ENCODE measurements at regions of chr7 and their contacts with region 1.

Region 1: GRCh38 chr7:2732959-2733584 is 45.1 kb downstream of the AMZ1 start:
- DNase-seq: peak; percentile 56 to 77 (median 64)
- H3K4me3 ChIP-seq: no peak overlapping the region
- H3K27ac ChIP-seq: peak overlapping the region in 1 of 2 donors; percentile 60
- H3K4me1 ChIP-seq: peaks cover 20% of the 10 kb centered on the region
- H3K27me3 ChIP-seq: no peaks in the 10 kb centered on the region
- CTCF ChIP-seq: peak in 1 of 3 donors; percentile 11
- EP300 ChIP-seq: no peak
- POLR2A ChIP-seq: no peak

Region 2: GRCh38 chr7:867672-868486 is 1865.2 kb before region 1 on chr7:
- intact Hi-C with region 1: no loop called
- DNase-seq: peak; percentile 36 to 70 (median 60)
- H3K4me3 ChIP-seq: no peak overlapping the region
- H3K27ac ChIP-seq: peak overlapping the region; percentile 81 to 85
- H3K4me1 ChIP-seq: peaks cover 19% of the 10 kb centered on the region
- H3K27me3 ChIP-seq: no peaks in the 10 kb centered on the region
- CTCF ChIP-seq: no peak
- EP300 ChIP-seq: no peak
- POLR2A ChIP-seq: no peak

Region 3: GRCh38 chr7:1738511-1738910 is 994.6 kb before region 1 on chr7:
- intact Hi-C with region 1: loop called in 1 of 4 experiments (anchors 5 kb)
- DNase-seq: no peak
- H3K4me3 ChIP-seq: no peak overlapping the region
- H3K27ac ChIP-seq: no peak overlapping the region
- H3K4me1 ChIP-seq: no peaks in the 10 kb centered on the region
- H3K27me3 ChIP-seq: no peaks in the 10 kb centered on the region
- CTCF ChIP-seq: no peak
- EP300 ChIP-seq: no peak
- POLR2A ChIP-seq: no peak

Region 4: GRCh38 chr7:2431260-2431867 is 301.7 kb before region 1 on chr7:
- intact Hi-C with region 1: no loop called
- DNase-seq: no peak
- H3K4me3 ChIP-seq: no peak overlapping the region
- H3K27ac ChIP-seq: no peak overlapping the region
- H3K4me1 ChIP-seq: no peaks in the 10 kb centered on the region
- H3K27me3 ChIP-seq: no peaks in the 10 kb centered on the region
- CTCF ChIP-seq: no peak
- EP300 ChIP-seq: no peak
- POLR2A ChIP-seq: no peak

Region 5: DNA sequence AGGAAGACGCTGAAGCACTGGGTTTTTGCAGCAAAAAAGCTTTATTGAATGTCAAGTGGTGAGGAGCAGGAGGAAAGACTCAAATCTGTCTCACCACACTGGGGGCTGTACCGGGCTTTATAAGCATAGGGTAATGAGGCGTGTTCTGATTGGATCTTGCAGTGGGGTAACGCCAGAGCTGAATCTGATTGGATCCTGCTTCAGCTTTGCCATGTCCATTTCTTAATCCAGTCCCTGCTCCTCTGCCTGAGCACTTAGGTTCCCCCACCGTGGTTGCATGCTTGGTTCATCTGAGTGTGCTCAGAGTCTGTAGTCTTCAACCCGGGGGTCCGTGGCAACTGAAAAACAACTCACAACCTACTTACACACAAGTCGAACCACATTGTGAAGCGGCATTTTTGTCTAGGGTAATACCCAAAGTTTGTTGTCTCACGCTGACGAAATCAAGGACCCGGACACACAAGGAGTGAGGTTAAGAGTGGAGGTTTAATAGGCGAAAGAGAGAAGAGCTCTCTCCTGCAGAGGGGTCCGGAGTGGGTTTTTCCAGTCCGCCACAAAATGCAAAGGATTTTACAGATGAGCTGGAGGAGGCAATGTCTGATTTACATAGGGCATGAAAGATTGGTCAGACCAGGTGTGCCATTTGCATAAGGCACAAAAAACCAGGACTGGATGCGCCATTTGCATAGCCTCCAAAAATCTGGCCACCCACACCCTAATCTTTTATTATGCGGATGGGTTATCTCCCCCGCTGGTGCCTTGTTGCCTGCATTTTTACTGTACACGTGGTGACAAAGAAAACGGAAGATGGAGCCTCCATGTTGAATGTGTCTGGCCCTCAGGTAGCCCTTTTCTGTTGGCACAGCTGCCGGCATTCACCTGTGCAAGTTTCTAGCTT is 1307.2 kb after region 1 on chr7:
- intact Hi-C with region 1: no loop called
- DNase-seq: no peak
- H3K4me3 ChIP-seq: no peak overlapping the region
- H3K27ac ChIP-seq: no peak overlapping the region
- H3K4me1 ChIP-seq: no peaks in the 10 kb centered on the region
- H3K27me3 ChIP-seq: no peaks in the 10 kb centered on the region
- CTCF ChIP-seq: no peak
- EP300 ChIP-seq: no peak
- POLR2A ChIP-seq: no peak

Region 6: DNA sequence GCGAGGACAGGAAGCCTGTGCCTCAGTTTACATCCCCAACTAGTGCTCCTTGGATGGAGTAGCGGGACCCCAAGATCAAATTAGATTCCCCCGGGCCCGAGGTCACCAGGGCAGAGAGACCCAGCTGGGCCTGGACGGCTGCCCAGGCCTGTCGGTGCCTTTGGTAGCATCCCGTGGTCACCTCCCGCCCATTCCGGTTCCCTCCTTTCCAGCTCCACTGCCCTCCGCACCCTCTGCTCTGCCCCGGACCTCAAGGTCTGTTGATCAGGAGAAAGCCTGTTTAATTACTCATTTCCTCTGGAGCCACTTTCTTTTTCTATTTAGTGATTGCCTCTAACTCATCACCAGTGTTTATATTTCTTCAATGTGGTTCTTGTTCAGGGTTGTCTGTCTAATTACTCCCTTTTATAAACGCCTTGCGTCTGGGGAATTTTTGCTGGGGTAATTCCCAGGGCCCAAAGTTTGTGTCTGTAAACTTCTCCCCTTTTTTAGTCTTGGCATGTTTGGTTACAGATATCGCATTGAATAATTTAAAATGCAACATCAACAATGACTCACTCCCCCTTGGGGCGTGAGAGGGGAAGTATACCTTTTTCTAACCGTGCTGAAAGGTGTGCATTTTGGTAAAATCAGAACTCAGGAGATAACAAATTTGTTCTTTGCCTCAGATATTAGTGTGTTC is 1951.0 kb after region 1 on chr7:
- intact Hi-C with region 1: no loop called
- DNase-seq: peak; percentile 53 to 71 (median 65)
- H3K4me3 ChIP-seq: peak overlapping the region; percentile 81
- H3K27ac ChIP-seq: peak overlapping the region; percentile 65 to 89
- H3K4me1 ChIP-seq: peaks cover 10% of the 10 kb centered on the region
- H3K27me3 ChIP-seq: no peaks in the 10 kb centered on the region
- CTCF ChIP-seq: no peak
- EP300 ChIP-seq: no peak
- POLR2A ChIP-seq: no peak

Measured in ovary (tissue), 10 donors.